Activated CD8-positive, alpha-beta T cell treated with anti-CD3 and anti-CD28 coated beads, Interleukin-2, amount 10 ng/mL, durations not matched to agents 7 days and 5 days (primary cell): ENCODE measurements at regions of chr16 and their contacts with region 1.

Region 1: GRCh38 chr16:84952335-84953189 is 58.8 kb downstream of the ZDHHC7 start:
- DNase-seq: peak; percentile 81
- ATAC-seq: peak; percentile 83
- H3K4me3 Mint-ChIP-seq: no peak overlapping the region
- H3K27ac Mint-ChIP-seq: no peak overlapping the region
- H3K4me1 Mint-ChIP-seq: peaks cover 6% of the 10 kb centered on the region
- H3K27me3 Mint-ChIP-seq: peaks cover 7% of the 10 kb centered on the region

Region 2: DNA sequence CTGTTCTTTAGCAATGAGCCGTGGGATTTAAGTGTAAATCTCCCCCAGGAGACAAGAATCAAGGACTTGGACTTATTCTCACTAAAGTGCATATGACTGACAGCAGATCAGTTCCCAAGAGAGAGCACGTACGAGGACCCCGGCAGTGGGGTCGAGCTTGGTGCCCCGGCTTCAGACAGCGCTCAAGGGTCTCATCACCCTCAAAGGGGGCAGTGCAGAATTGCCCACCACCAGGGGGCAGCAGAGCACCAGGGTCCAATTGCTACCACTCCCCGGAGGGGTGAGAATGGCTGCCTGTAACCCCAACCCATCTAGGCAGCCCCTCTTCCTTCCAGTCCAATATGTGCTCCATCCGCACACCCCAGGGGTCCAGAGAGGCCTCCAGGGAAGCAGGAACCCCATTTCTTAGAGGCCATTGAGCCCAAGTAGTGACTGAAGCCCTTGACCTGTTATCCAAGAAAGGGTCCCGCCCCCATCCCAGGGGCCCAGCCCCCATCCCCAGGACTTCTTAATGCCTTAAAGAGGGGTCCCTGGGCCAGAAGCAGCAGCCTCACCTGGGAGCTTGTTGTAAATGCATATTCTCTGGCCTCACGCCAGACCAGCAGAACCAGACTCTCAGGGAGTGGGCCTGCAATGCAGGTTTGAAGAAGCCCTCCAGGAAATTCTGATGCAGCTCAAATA is 27.3 kb before region 1 on chr16:
- CTCF ChIA-PET with region 1: interaction called, 15 read pairs
- POLR2A ChIA-PET with region 1: no interaction called
- DNase-seq: peak; percentile 78
- ATAC-seq: peak; percentile 77
- H3K4me3 Mint-ChIP-seq: no peak overlapping the region
- H3K27ac Mint-ChIP-seq: no peak overlapping the region
- H3K4me1 Mint-ChIP-seq: no peaks in the 10 kb centered on the region
- H3K27me3 Mint-ChIP-seq: no peaks in the 10 kb centered on the region

Region 3: DNA sequence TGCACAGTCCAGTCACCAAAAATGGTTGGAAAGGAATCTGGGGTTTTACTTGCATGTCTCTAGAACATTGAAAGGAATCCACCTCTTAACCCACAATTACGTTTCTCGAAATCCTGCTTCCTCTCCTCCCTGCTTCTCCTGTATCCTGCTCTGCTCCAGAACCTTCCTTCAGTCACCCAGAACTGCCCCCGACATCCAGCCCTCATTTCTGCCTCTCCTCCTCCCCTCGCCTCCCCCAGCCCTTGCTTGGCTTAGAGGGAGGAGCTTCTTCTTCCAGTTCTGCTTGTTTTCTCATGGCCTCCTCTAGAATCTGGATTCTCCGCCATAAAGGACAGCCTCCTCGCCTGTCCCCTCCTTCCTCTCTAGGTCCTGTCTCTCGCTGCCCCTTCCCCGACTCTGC is 10.5 kb after region 1 on chr16:
- CTCF ChIA-PET with region 1: interaction called, 15 read pairs
- POLR2A ChIA-PET with region 1: no interaction called
- DNase-seq: no peak
- ATAC-seq: no peak
- H3K4me3 Mint-ChIP-seq: no peak overlapping the region
- H3K27ac Mint-ChIP-seq: no peak overlapping the region
- H3K4me1 Mint-ChIP-seq: peaks cover 6% of the 10 kb centered on the region
- H3K27me3 Mint-ChIP-seq: no peaks in the 10 kb centered on the region

Region 4: GRCh38 chr16:84970447-84971127 is 18.0 kb after region 1 on chr16:
- CTCF ChIA-PET with region 1: interaction called, 32 read pairs
- POLR2A ChIA-PET with region 1: no interaction called
- DNase-seq: peak; percentile 84
- ATAC-seq: peak; percentile 98
- H3K4me3 Mint-ChIP-seq: no peak overlapping the region
- H3K27ac Mint-ChIP-seq: no peak overlapping the region
- H3K4me1 Mint-ChIP-seq: peaks cover 5% of the 10 kb centered on the region
- H3K27me3 Mint-ChIP-seq: peaks cover 2% of the 10 kb centered on the region

Region 5: GRCh38 chr16:85027349-85027957 is 74.9 kb after region 1 on chr16 and contains the start of gene KIAA0513:
- CTCF ChIA-PET with region 1: no interaction called
- POLR2A ChIA-PET with region 1: no interaction called
- DNase-seq: peak; percentile 95
- ATAC-seq: peak; percentile 81
- H3K4me3 Mint-ChIP-seq: peak within 1 kb of the TSS; percentile 87
- H3K27ac Mint-ChIP-seq: peak within 1 kb of the TSS; percentile 86
- H3K4me1 Mint-ChIP-seq: peaks cover 41% of the 10 kb centered on the region
- H3K27me3 Mint-ChIP-seq: no peaks in the 10 kb centered on the region
- total RNA-seq, gene KIAA0513: 8.1 to 9.1 TPM

Region 6: GRCh38 chr16:85114909-85115567 is 162.5 kb after region 1 on chr16:
- CTCF ChIA-PET with region 1: no interaction called
- POLR2A ChIA-PET with region 1: no interaction called
- DNase-seq: peak; percentile 89
- ATAC-seq: peak; percentile 93
- H3K4me3 Mint-ChIP-seq: peak overlapping the region; percentile 68
- H3K27ac Mint-ChIP-seq: peak overlapping the region; percentile 91
- H3K4me1 Mint-ChIP-seq: peaks cover 13% of the 10 kb centered on the region
- H3K27me3 Mint-ChIP-seq: no peaks in the 10 kb centered on the region

Region 7: GRCh38 chr16:85151603-85152413 is 199.2 kb after region 1 on chr16:
- CTCF ChIA-PET with region 1: no interaction called
- POLR2A ChIA-PET with region 1: no interaction called
- DNase-seq: no peak
- ATAC-seq: no peak
- H3K4me3 Mint-ChIP-seq: no peak overlapping the region
- H3K27ac Mint-ChIP-seq: no peak overlapping the region
- H3K4me1 Mint-ChIP-seq: no peaks in the 10 kb centered on the region
- H3K27me3 Mint-ChIP-seq: no peaks in the 10 kb centered on the region

Region 8: DNA sequence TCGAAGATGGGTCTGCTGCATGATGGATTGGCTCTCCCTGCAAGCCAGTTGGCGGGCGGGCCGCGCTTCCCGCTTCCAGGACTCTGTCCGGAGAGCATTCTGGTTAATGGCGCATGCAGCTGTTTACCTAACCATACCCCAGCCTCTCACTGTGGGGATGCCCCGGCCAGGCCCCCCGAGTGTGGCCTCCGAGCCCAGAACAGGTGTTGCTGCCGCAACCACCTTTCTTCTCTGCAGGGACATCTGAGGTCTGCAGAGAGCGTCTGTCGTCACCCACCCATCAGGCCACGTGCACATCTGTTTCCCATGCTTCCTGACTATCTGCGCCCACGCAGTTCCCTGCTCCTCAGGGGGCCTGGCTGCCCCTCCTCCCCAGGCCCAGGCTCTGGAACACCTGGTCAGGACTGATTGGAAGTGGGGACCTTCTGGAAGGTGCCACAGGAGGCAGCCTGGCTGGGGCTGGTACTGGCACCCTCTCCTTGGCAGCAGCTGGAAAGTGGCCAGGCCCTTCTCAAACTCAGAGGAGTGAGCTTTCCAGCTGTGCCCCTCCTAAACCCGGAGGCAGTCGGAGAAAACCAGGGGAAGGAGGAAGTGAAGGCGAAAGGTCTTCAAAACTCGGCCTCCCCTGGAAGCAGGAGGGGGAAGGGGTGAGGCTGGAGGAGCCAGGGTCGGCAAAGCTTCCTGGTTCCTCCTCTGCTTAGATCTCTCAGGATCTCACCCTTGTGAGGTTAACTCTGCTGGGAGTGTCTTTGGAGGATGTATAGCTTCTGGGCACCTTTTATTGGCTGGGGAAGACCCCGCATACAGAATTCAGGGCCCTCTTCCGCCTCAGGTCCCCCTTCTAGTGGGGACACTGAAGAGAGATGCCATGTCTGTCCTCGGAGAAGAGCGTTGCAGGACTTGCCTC is 224.2 kb after region 1 on chr16:
- CTCF ChIA-PET with region 1: no interaction called
- POLR2A ChIA-PET with region 1: no interaction called
- DNase-seq: no peak
- ATAC-seq: no peak
- H3K4me3 Mint-ChIP-seq: no peak overlapping the region
- H3K27ac Mint-ChIP-seq: no peak overlapping the region
- H3K4me1 Mint-ChIP-seq: no peaks in the 10 kb centered on the region
- H3K27me3 Mint-ChIP-seq: peaks cover 39% of the 10 kb centered on the region